ENCODE measurements at regions of chr3 and their contacts with region 1.

Region 1: DNA sequence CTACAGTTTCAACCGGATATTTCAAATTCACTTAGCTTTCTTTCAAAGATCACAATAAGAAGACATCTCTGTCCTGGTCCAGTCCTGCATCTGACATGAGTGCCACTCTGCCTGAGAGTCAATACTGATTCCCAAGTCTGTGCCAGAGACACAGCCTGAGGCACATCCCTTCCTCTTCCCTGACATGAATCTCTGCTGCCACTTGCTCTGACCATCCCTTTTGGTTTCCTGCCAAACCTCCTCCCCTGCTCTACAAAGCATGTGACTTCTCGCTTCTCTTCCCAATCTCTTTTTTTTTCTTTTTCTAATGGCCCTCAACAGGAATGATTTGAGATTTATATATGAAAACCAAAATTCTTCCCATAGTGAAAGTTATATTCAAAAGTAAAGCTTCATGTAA is 117.9 kb downstream of the MECOM start:
- DNase-seq: no peak
- H3K4me3 ChIP-seq: no peak overlapping the region
- H3K27ac ChIP-seq: no peak overlapping the region
- H3K4me1 ChIP-seq: no peaks in the 10 kb centered on the region
- H3K27me3 ChIP-seq: no peaks in the 10 kb centered on the region
- CTCF ChIP-seq: no peak

Region 2: DNA sequence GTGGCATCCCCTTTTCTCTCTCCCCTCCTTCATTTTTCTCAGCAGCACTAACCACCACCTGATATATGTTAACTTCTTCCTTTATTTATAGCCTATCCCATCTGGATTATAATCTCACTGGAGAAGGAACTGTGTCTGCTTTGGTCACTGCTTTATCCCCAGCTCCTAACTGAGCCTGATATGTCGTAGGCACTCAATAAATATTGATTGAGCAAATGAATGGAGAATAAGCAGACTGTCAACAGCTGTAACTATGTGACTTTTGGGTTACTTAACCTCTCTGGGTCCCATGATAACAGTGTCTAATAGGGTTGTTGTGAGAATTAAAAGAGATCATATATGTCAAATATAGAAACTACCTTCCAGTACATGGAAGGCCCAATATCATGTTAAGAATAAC is 10.0 kb before region 1 on chr3:
- CTCF ChIA-PET with region 1: no interaction called
- POLR2A ChIA-PET with region 1: interaction called, 14 read pairs
- intact Hi-C with region 1: no loop called
- DNase-seq: no peak
- H3K4me3 ChIP-seq: no peak overlapping the region
- H3K27ac ChIP-seq: no peak overlapping the region
- H3K4me1 ChIP-seq: peaks cover 6% of the 10 kb centered on the region; the same call in 1 of the 2 replicates
- H3K27me3 ChIP-seq: no peaks in the 10 kb centered on the region
- CTCF ChIP-seq: no peak